ENCODE measurements at regions of chr2 and their contacts with region 1.

Region 1: GRCh38 chr2:85813982-85814801 is 60.4 kb downstream of the ATOH8 start:
- DNase-seq: peak; percentile 60
- H3K4me3 ChIP-seq: no peak overlapping the region
- H3K27ac ChIP-seq: no peak overlapping the region
- H3K4me1 ChIP-seq: no peaks in the 10 kb centered on the region
- H3K27me3 ChIP-seq: no peaks in the 10 kb centered on the region
- CTCF ChIP-seq: peak; percentile 97

Region 2: GRCh38 chr2:85642725-85643124 is 171.5 kb before region 1 on chr2:
- CTCF ChIA-PET with region 1: no interaction called
- dilution Hi-C with region 1: no loop called
- in situ Hi-C with region 1: loop called in 1 of 2 experiments (anchors 5 kb)
- intact Hi-C with region 1: loop called (anchors 1 kb)
- DNase-seq: no peak
- H3K4me3 ChIP-seq: no peak overlapping the region
- H3K27ac ChIP-seq: no peak overlapping the region
- H3K4me1 ChIP-seq: no peaks in the 10 kb centered on the region
- H3K27me3 ChIP-seq: no peaks in the 10 kb centered on the region
- CTCF ChIP-seq: no peak

Region 3: DNA sequence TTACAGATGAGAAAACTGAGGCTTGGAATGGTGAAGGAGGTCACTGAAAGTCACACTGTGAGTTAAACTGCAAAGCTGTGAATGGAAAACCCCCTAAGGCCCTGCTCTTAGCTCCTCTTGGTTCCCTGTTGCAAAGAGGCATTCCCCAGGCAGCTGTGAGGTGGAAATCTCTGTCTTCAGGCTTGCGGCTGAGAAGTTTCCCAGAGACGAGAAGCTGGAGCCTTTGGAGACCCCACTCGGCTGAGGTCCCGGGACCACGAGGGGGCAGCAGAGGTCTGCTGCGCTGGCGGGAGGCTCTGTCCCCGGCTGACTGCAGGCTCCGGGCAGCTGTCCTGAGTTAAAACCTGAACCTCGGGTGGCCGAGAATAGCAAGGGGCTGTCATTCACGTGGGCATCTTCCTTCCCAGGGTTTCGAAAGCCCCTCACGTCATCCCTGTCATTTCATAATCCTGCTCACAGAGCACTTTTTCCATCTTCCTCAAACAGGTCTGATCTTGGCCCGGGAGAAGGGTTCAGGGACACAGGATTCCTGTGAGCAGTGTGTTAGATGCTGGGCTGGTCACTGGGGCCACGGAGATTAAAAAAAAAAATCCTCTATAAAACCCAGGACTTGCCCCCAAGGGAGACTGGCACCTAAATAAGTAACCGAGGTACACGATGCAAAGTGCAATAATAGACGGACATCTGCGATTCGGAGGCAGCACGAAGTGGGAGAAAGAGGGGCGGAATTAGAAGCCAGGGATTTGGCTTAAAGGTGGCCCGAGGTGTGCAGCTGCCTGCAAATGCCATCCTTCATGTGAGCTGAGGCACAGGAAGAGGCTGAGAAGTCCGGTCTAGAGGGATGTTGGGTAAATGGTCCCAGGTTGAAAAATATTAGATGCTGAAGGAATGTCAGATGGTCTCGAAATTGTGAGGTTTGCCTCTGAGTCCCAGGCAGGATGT is 85.0 kb before region 1 on chr2:
- CTCF ChIA-PET with region 1: interaction called, 8 read pairs
- dilution Hi-C with region 1: no loop called
- in situ Hi-C with region 1: no loop called
- intact Hi-C with region 1: loop called (anchors 1 kb)
- DNase-seq: peak; percentile 45
- H3K4me3 ChIP-seq: no peak overlapping the region
- H3K27ac ChIP-seq: no peak overlapping the region
- H3K4me1 ChIP-seq: no peaks in the 10 kb centered on the region
- H3K27me3 ChIP-seq: peaks cover 5% of the 10 kb centered on the region
- CTCF ChIP-seq: peak; percentile 82 to 98

Region 4: DNA sequence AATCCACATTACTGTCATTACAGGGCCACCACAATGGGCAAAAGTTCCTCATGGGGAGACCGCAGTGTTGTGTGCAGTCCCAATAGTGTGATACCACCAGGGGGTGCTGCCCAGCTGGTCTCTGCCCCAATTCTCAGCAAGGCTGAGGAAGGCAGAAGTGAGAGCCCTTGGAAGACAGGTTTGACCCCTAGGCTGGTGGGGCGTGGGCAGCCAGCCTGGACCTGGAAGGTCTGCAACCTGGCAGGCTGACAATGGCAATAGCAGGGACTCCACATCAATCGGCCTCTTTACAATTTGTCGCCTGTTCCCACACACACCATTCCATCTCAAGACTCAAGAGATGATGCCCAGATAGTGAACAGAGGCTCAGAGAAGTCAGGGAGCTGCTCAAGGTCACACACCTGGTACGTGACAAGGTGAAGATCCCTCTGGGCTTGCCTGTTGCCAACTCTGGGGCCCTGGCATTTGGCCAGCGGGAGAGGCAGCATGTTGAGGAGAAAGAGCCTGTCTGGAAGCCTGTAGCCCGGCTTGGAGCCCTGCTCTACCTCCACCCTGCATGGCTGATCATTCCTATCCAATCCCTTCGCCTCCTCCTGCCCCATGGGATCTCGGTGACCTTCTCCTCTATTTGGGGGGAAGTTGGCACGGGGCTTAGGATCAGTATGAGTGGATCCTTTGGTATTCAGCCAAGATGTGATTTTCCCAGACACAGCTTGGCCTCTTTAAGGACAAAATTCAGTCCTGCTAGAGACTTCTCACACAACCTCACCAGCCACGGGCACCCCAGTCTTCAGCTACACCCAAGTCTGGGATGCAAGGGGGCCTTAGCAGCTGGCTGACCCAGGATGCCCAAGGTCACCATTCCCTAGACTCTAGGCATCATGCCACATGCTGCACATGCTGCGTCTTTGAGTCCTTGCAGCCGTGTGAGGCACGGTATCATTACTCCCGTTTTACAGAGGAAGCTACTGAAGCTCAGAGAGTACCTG is 63.3 kb before region 1 on chr2:
- CTCF ChIA-PET with region 1: interaction called, 5 read pairs
- dilution Hi-C with region 1: no loop called
- in situ Hi-C with region 1: no loop called
- intact Hi-C with region 1: loop called (anchors 1 kb)
- DNase-seq: peak; percentile 28
- H3K4me3 ChIP-seq: no peak overlapping the region
- H3K27ac ChIP-seq: no peak overlapping the region
- H3K4me1 ChIP-seq: peaks cover 12% of the 10 kb centered on the region
- H3K27me3 ChIP-seq: peaks cover 40% of the 10 kb centered on the region
- CTCF ChIP-seq: peak; percentile 90 to 95

Region 5: DNA sequence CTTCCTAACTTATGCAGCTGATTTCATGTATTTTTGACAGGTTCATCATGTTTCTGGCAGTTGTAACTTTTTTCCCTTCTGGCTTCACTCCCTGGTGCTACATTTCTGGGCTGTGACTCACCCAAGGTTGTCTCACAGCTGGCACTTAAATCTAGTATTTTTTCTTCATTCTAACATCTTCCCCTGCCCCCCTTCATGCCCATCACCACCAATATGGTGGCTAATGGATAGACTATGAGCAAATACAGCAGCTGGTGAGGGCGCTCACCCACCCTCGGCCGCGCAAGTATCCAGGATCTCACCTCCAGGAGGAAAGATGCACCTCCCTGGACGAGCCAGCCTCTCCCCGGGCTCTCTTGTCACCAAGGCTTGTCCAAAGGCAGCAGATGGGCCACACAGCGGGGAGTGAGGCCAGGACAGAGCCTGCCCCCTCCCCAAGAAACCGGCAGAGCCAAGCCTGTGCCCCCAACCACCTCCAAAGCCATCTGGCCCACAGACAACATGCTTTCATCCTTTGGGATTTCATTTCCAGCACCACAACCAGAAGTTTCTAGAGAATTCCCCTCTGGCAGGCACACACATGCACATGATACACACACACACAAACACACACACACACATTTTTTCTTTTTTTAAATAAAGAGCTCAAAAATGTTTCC is 21.3 kb before region 1 on chr2:
- CTCF ChIA-PET with region 1: no interaction called
- dilution Hi-C with region 1: no loop called
- in situ Hi-C with region 1: no loop called
- intact Hi-C with region 1: no loop called
- DNase-seq: peak; percentile 38
- H3K4me3 ChIP-seq: no peak overlapping the region
- H3K27ac ChIP-seq: no peak overlapping the region
- H3K4me1 ChIP-seq: peaks cover 12% of the 10 kb centered on the region
- H3K27me3 ChIP-seq: peaks cover 2% of the 10 kb centered on the region
- CTCF ChIP-seq: no peak

Region 6: DNA sequence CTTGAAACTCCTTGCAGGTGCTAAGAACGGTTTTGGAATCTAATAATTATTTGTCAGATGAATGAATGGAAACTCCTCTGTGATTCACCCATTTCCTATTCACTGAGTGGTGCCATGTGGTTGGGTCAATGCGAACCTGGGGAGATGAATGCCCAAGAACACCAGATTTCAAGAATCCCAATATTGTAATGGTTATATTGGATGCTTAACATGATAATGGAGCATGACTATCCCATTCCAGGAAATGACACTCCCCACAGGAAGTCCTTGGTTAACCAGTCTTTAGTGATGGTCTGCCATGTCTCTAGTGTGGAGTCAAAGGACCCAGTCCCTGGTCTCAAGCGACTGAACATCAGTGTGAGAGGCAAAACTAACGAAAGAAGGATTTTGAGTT is 142.5 kb after region 1 on chr2:
- CTCF ChIA-PET with region 1: no interaction called
- dilution Hi-C with region 1: no loop called
- in situ Hi-C with region 1: no loop called
- intact Hi-C with region 1: no loop called
- DNase-seq: no peak
- H3K4me3 ChIP-seq: no peak overlapping the region
- H3K27ac ChIP-seq: peak overlapping the region; percentile 50
- H3K4me1 ChIP-seq: peaks cover 15% of the 10 kb centered on the region
- H3K27me3 ChIP-seq: no peaks in the 10 kb centered on the region
- CTCF ChIP-seq: no peak